OCI-LY7 (cell line): ENCODE measurements at regions of chr1 and their contacts with region 1.

Region 1: DNA sequence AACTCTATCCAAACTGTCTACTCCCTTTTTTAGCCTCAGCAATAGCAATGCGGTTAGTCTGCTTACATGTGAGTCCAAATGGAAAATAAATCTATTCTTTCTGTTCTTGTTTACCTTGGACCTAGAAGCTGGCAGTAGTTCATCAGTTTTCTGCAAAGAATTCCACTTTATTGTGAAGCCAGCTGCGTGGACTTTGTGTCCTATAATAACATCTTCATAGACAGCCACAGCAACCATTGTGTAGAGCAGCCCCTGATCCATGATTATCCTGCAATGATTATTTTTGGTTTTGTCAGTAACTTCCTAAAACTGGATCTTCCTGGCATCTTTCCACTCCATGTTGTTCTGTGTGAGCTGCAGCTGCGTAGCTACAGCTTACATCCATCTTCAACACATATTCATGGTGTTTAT is 408.7 kb downstream of the NUF2 start:
- DNase-seq: no peak
- H3K4me3 ChIP-seq: no peak overlapping the region
- H3K27ac ChIP-seq: no peak overlapping the region
- H3K4me1 ChIP-seq: no peaks in the 10 kb centered on the region
- CTCF ChIP-seq: no peak

Region 2: DNA sequence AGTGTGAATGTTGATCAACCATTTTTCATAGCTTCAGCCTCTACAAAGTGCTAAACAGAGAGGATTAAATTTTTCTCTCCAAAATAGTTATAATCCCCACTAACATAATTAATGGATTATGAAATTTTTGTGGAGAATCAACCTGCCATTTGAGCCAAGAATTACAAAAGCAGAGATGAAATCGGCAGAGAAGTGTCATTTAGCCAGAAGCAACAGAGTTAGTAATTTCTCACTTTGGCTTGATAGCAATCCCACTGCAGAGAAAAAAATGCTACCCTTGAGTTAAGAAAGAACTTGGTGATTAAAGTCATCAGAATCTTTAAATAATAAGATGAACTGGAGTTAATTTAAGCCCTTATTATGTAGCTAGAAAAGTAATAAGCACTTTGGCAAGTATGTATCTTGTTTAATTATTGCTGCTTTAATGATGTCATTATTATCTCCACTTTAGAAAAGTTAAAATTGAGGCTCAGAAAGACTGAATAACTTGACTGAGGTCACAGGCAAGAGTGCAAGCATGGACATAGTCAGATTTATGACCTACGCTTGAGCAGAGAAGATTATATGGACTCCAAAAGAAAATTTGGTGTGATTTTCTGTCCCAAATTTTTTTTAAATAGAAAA is 623.9 kb before region 1 on chr1:
- CTCF ChIA-PET with region 1: no interaction called
- POLR2A ChIA-PET with region 1: no interaction called
- intact Hi-C with region 1: no loop called
- DNase-seq: no peak
- H3K4me3 ChIP-seq: no peak overlapping the region
- H3K27ac ChIP-seq: no peak overlapping the region
- H3K4me1 ChIP-seq: no peaks in the 10 kb centered on the region
- CTCF ChIP-seq: no peak

Region 3: GRCh38 chr1:163673759-163674151 is 56.7 kb before region 1 on chr1:
- CTCF ChIA-PET with region 1: no interaction called
- POLR2A ChIA-PET with region 1: no interaction called
- intact Hi-C with region 1: loop called (anchors 10 kb)
- DNase-seq: no peak
- H3K4me3 ChIP-seq: no peak overlapping the region
- H3K27ac ChIP-seq: no peak overlapping the region
- H3K4me1 ChIP-seq: no peaks in the 10 kb centered on the region
- CTCF ChIP-seq: no peak